ENCODE measurements at regions of chr20 and their contacts with region 1.

Region 1: GRCh38 chr20:12925214-12925755 is 83.5 kb upstream of the SPTLC3 start:
- DNase-seq: peak in 5 of 14 experiments; percentile 2 to 58 (median 25)
- ATAC-seq: peak; percentile 80
- H3K4me3 ChIP-seq: no peak overlapping the region
- H3K4me3 Mint-ChIP-seq: no peak overlapping the region
- H3K27ac ChIP-seq: no peak overlapping the region
- H3K27ac Mint-ChIP-seq: no peak overlapping the region
- H3K4me1 ChIP-seq: no peaks in the 10 kb centered on the region
- H3K4me1 Mint-ChIP-seq: peaks cover 13% of the 10 kb centered on the region
- H3K27me3 ChIP-seq: no peaks in the 10 kb centered on the region
- H3K27me3 Mint-ChIP-seq: peaks cover 4% of the 10 kb centered on the region
- CTCF ChIP-seq: peak; percentile 57

Region 2: DNA sequence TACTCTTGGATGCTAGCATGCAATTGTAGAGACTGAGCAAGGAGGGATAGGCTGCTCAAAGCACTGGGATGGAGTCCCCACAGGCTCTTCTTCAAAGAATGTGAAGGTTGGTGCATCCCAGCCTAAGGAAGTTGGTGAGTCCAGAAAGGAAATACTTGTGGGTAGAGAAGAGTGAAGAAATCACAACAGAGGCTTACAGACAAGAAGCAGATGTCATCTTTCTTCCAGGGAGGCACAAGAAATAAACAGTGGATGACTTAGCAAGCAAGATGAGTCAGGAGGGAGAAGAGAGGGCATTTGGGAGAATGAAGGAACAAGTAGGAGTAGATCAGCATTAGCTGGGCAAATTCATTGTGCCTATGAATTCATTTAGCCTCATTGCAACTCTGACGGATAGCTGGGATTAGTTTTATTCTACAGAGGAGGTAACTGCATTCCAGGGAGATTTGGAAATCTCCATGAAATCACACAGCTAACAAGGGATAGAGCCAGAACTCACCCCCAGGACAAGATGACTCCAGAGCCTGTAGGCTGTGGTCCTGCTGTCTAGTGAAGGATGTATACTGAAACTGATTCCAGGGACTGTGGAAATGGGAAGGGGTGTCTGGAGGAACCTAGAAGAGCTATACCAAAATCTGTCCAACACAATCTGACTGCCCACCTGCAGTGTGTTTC is 42.3 kb before region 1 on chr20:
- CTCF ChIA-PET with region 1: no interaction called
- POLR2A ChIA-PET with region 1: no interaction called
- intact Hi-C with region 1: no loop called
- DNase-seq: no peak
- ATAC-seq: no peak
- H3K4me3 ChIP-seq: no peak overlapping the region
- H3K4me3 Mint-ChIP-seq: no peak overlapping the region
- H3K27ac ChIP-seq: no peak overlapping the region
- H3K27ac Mint-ChIP-seq: no peak overlapping the region
- H3K4me1 ChIP-seq: no peaks in the 10 kb centered on the region
- H3K4me1 Mint-ChIP-seq: no peaks in the 10 kb centered on the region
- H3K27me3 ChIP-seq: no peaks in the 10 kb centered on the region
- H3K27me3 Mint-ChIP-seq: peaks cover 14% of the 10 kb centered on the region
- CTCF ChIP-seq: no peak

Region 3: DNA sequence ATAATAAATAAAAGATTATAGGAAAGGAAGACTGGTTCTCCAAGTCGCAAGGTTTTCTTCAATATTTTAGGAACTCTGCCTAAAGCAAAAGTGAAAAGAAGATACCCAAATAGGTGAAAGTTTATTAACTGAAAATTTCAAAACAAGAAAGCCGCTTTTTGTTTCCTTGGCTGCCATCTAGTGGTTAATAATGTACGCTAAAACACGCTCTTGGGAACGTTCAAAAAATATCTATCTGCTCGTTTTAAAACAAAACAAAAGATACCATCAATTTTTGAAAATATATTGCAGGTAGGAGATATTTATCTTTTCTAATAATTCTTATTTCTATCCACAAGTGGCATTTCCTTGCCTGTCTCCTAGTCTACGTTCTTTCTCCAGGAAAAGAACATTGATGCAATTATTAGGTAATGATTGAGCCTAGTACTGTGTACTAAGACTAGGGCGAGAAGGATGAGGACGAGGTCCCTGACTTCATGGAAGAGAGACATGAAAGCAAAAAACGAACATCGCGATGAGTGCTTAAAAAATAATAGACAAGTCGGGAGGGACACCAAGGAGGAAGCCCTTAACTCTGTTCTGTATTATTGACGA is 180.7 kb after region 1 on chr20:
- CTCF ChIA-PET with region 1: no interaction called
- POLR2A ChIA-PET with region 1: no interaction called
- intact Hi-C with region 1: loop called (anchors 1 to 2 kb)
- DNase-seq: peak in 3 of 14 experiments; percentile 15 to 35 (median 24)
- ATAC-seq: no peak
- H3K4me3 ChIP-seq: no peak overlapping the region
- H3K4me3 Mint-ChIP-seq: no peak overlapping the region
- H3K27ac ChIP-seq: no peak overlapping the region
- H3K27ac Mint-ChIP-seq: no peak overlapping the region
- H3K4me1 ChIP-seq: no peaks in the 10 kb centered on the region
- H3K4me1 Mint-ChIP-seq: no peaks in the 10 kb centered on the region
- H3K27me3 ChIP-seq: no peaks in the 10 kb centered on the region
- H3K27me3 Mint-ChIP-seq: no peaks in the 10 kb centered on the region
- CTCF ChIP-seq: peak; percentile 70

Region 4: GRCh38 chr20:13546497-13547131 is 621.3 kb after region 1 on chr20:
- CTCF ChIA-PET with region 1: no interaction called
- POLR2A ChIA-PET with region 1: no interaction called
- intact Hi-C with region 1: loop called in 1 of 2 experiments (anchors 2 kb)
- DNase-seq: peak; percentile 36 to 73 (median 52)
- ATAC-seq: no peak
- H3K4me3 ChIP-seq: no peak overlapping the region
- H3K4me3 Mint-ChIP-seq: no peak overlapping the region
- H3K27ac ChIP-seq: no peak overlapping the region
- H3K27ac Mint-ChIP-seq: no peak overlapping the region
- H3K4me1 ChIP-seq: no peaks in the 10 kb centered on the region
- H3K4me1 Mint-ChIP-seq: no peaks in the 10 kb centered on the region
- H3K27me3 ChIP-seq: no peaks in the 10 kb centered on the region
- H3K27me3 Mint-ChIP-seq: no peaks in the 10 kb centered on the region
- CTCF ChIP-seq: peak; percentile 84

Region 5: GRCh38 chr20:13771853-13772453 is 846.7 kb after region 1 on chr20:
- CTCF ChIA-PET with region 1: no interaction called
- POLR2A ChIA-PET with region 1: no interaction called
- intact Hi-C with region 1: loop called in 1 of 2 experiments (anchors 5 kb)
- DNase-seq: peak in 3 of 14 experiments; percentile 14 to 38 (median 20)
- ATAC-seq: no peak
- H3K4me3 ChIP-seq: no peak overlapping the region
- H3K4me3 Mint-ChIP-seq: no peak overlapping the region
- H3K27ac ChIP-seq: no peak overlapping the region
- H3K27ac Mint-ChIP-seq: no peak overlapping the region
- H3K4me1 ChIP-seq: no peaks in the 10 kb centered on the region
- H3K4me1 Mint-ChIP-seq: peaks cover 9% of the 10 kb centered on the region
- H3K27me3 ChIP-seq: no peaks in the 10 kb centered on the region
- H3K27me3 Mint-ChIP-seq: no peaks in the 10 kb centered on the region
- CTCF ChIP-seq: peak; percentile 83